HCT116 (cell line): ENCODE measurements at regions of chr7 and their contacts with region 1.

Region 1: GRCh38 chr7:54292171-54292925 is 249.8 kb upstream of the VSTM2A start:
- DNase-seq: no peak
- ATAC-seq: no peak
- H3K4me3 ChIP-seq: no peak overlapping the region
- H3K27ac ChIP-seq: no peak overlapping the region
- H3K4me1 ChIP-seq: no peaks in the 10 kb centered on the region
- H3K27me3 ChIP-seq: no peaks in the 10 kb centered on the region
- CTCF ChIP-seq: no peak
- POLR2A ChIP-seq: no peak
- RAD21 ChIP-seq: no peak

Region 2: GRCh38 chr7:54161621-54162020 is 130.7 kb before region 1 on chr7:
- CTCF ChIA-PET with region 1: no interaction called
- POLR2A ChIA-PET with region 1: no interaction called
- RAD21 ChIA-PET with region 1: no interaction called
- intact Hi-C with region 1: no loop called
- DNase-seq: no peak
- ATAC-seq: no peak
- H3K4me3 ChIP-seq: no peak overlapping the region
- H3K27ac ChIP-seq: no peak overlapping the region
- H3K4me1 ChIP-seq: no peaks in the 10 kb centered on the region
- H3K27me3 ChIP-seq: no peaks in the 10 kb centered on the region
- CTCF ChIP-seq: no peak
- POLR2A ChIP-seq: no peak
- RAD21 ChIP-seq: no peak

Region 3: DNA sequence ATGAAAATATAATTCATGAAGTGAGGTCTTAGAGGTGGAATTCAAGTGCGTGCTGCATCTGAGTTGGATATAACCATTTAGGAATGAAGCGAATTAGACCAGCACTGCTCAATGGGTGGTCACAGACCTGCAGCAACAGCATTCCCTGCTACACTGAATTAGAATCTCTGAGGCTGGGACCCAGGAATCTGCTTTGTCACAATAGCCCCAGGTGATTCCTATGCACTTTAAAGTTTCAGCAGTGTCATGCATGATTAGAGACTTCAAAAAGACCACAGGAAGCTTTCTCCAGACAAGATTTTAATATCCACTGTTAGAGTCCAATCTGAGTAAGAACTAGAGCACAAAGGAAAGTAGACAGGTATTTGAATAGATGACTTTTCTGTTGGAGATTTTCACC is 103.0 kb before region 1 on chr7:
- CTCF ChIA-PET with region 1: no interaction called
- POLR2A ChIA-PET with region 1: no interaction called
- RAD21 ChIA-PET with region 1: no interaction called
- intact Hi-C with region 1: loop called (anchors 1 kb)
- DNase-seq: no peak
- ATAC-seq: no peak
- H3K4me3 ChIP-seq: no peak overlapping the region
- H3K27ac ChIP-seq: no peak overlapping the region
- H3K4me1 ChIP-seq: no peaks in the 10 kb centered on the region
- H3K27me3 ChIP-seq: no peaks in the 10 kb centered on the region
- CTCF ChIP-seq: no peak
- POLR2A ChIP-seq: no peak
- RAD21 ChIP-seq: no peak

Region 4: GRCh38 chr7:55348499-55348898 is 1056.2 kb after region 1 on chr7:
- CTCF ChIA-PET with region 1: no interaction called
- POLR2A ChIA-PET with region 1: no interaction called
- RAD21 ChIA-PET with region 1: no interaction called
- intact Hi-C with region 1: no loop called
- DNase-seq: no peak
- ATAC-seq: no peak
- H3K4me3 ChIP-seq: no peak overlapping the region
- H3K27ac ChIP-seq: no peak overlapping the region
- H3K4me1 ChIP-seq: no peaks in the 10 kb centered on the region
- H3K27me3 ChIP-seq: no peaks in the 10 kb centered on the region
- CTCF ChIP-seq: no peak
- POLR2A ChIP-seq: no peak
- RAD21 ChIP-seq: no peak